Transverse colon (tissue), 4 donors: ENCODE measurements at regions of chr14 and their contacts with region 1.

Region 1: GRCh38 chr14:52563120-52563519 is 10.5 kb downstream of the GPR137C start:
- DNase-seq: no peak
- H3K4me3 ChIP-seq: no peak overlapping the region
- H3K27ac ChIP-seq: no peak overlapping the region
- H3K4me1 ChIP-seq: peaks cover 0 to 3% (median 0%) of the 10 kb centered on the region in 4 donors
- H3K27me3 ChIP-seq: no peaks in the 10 kb centered on the region
- CTCF ChIP-seq: no peak
- EP300 ChIP-seq: no peak
- POLR2A ChIP-seq: no peak

Region 2: DNA sequence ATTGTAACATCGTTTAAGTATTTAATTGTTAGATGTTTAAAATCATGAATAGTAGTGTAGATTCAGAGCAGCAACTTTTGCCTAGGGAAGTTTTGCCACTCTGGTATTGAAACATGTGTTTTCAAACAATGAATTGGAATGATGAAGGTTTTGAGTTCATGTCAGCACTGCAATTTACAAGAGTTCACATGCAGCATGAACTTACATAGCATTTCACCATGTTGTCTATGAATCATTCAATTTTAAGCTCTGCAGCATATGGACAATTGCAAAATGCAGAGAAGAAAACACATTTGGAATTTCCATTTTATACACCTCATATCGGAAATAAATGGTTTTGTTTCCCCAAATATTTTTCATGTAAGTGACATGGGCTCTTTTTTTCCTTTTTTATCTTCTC is 1663.0 kb after region 1 on chr14:
- in situ Hi-C with region 1: no loop called
- intact Hi-C with region 1: loop called (anchors 5 kb)
- DNase-seq: no peak
- H3K4me3 ChIP-seq: no peak overlapping the region
- H3K27ac ChIP-seq: no peak overlapping the region
- H3K4me1 ChIP-seq: no peaks in the 10 kb centered on the region
- H3K27me3 ChIP-seq: peaks cover 4% of the 10 kb centered on the region
- CTCF ChIP-seq: no peak
- EP300 ChIP-seq: no peak
- POLR2A ChIP-seq: no peak